ENCODE measurements at regions of chr15 and their contacts with region 1.

Region 1: DNA sequence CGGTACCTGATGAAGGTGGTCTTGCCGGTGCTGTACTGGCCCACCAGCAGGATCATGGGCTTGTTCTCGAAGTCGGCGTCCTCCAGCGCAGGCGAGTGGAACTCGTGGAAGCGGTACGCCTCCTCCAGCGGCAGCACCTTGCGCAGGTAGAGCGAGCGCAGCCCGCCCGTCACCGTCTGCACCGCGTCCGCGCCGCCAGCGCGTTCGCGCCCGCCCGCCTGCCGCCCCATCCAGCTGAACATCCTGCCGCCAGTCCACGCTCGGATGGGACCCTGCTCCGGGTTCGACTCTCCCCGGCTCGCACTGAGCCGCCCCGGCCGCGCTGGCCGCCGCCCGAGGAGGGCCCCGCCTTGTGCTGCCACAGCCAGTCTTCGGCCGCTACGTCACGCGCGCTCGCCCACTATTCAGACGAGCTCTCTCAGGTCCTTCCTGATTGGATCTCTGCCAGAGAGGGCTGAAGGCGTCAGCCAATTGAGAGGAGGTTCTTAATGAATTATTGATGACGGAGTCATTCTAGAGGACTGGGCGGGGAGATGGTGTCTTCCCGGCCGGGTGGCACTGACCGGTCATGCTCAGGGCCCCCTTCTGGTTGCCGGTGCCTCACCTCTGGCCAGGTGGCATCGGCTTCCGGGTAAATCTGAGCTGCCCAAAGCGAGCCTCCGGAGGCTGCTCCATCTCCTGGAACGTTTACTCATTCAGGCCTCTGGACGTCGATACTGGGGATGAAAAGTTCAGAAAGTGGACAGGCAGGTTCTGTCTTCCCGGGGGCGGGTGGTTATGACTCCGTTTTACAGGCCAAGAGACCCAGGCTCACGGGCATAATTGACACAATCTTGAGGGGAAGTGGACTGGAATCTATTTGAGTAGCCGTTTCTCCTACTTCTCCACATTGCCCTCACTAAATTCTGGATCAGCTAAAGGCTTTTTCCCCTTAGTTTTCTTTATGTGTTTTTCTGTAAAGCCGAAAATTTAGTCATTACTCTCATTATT is at the start of gene EHD4:
- DNase-seq: peak; percentile 89 to 98 (median 97)
- H3K4me3 ChIP-seq: peak within 1 kb of the TSS; percentile 65 to 98 (median 88)
- H3K27ac ChIP-seq: peak within 1 kb of the TSS in 54 of 59 donors; percentile 10 to 93 (median 74)
- H3K27me3 ChIP-seq: peaks cover 0 to 5% (median 0%) of the 10 kb centered on the region in 45 donors
- CTCF ChIP-seq: peak in 51 of 56 donors; percentile 5 to 60 (median 43)
- total RNA-seq, gene EHD4: 3.6 to 11.6 (median 6.1) TPM

Region 2: GRCh38 chr15:41774062-41774881 is 198.3 kb before region 1 on chr15 and contains the start of gene MAPKBP1:
- intact Hi-C with region 1: loop called in 1 of 2 experiments (anchors 5 kb)
- DNase-seq: peak; percentile 94 to 98 (median 96)
- H3K4me3 ChIP-seq: peak within 1 kb of the TSS; percentile 58 to 95 (median 86)
- H3K27ac ChIP-seq: peak within 1 kb of the TSS; percentile 70 to 97 (median 91)
- H3K27me3 ChIP-seq: no peaks in the 10 kb centered on the region
- CTCF ChIP-seq: peak; percentile 57 to 92 (median 76)
- total RNA-seq, gene MAPKBP1: 50.5 to 136 (median 77.6) TPM

Region 3: GRCh38 chr15:41827880-41828806 is 144.4 kb before region 1 on chr15 and contains the start of gene JMJD7:
- intact Hi-C with region 1: loop called in 1 of 2 experiments (anchors 10 kb)
- DNase-seq: peak; percentile 84 to 97 (median 92)
- H3K4me3 ChIP-seq: peak within 1 kb of the TSS; percentile 58 to 99 (median 87)
- H3K27ac ChIP-seq: peak within 1 kb of the TSS; percentile 55 to 95 (median 84)
- H3K27me3 ChIP-seq: no peaks in the 10 kb centered on the region
- CTCF ChIP-seq: peak in 13 of 56 donors; percentile 6 to 44 (median 21)
- total RNA-seq, gene JMJD7: 13.4 to 55.9 (median 25.6) TPM

Region 4: GRCh38 chr15:41917767-41918430 is 54.6 kb before region 1 on chr15:
- intact Hi-C with region 1: loop called (anchors 5 to 10 kb)
- DNase-seq: peak in 1 of 10 donors; percentile 44
- H3K4me3 ChIP-seq: no peak overlapping the region
- H3K27ac ChIP-seq: peak overlapping the region in 58 of 59 donors; percentile 8 to 93 (median 85)
- H3K27me3 ChIP-seq: no peaks in the 10 kb centered on the region
- CTCF ChIP-seq: no peak

Region 5: DNA sequence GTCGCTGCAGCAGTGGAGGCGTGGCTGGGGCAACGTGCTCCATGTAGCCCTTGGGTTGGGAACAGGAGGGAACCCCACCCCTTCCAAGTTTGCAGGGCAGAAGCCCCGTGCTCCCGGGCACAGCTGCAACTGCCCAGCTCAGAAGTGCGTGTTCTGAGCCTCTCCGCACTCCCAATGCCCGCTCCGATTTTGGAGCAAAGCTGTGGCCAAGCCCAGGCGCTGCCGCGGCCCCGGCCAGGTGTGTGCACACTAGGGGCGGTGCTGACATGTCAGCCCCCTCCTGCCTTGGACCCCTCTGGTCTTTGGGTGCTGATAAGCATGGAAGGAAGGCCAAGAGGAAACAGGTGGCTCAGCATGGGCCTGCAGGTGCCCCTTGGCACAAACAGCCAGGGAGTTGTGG is 1035.6 kb after region 1 on chr15:
- intact Hi-C with region 1: no loop called
- DNase-seq: peak in 1 of 10 donors; percentile 14
- H3K4me3 ChIP-seq: no peak overlapping the region
- H3K27ac ChIP-seq: peak overlapping the region in 1 of 59 donors; percentile 40
- H3K27me3 ChIP-seq: no peaks in the 10 kb centered on the region
- CTCF ChIP-seq: no peak

Measured in dorsolateral prefrontal cortex (tissue), 120 donors.